ENCODE measurements at regions of chr15 and their contacts with region 1.

Region 1: GRCh38 chr15:89472785-89473256 is 23.6 kb downstream of the RHCG start:
- DNase-seq: peak; percentile 80
- ATAC-seq: peak; percentile 81
- H3K4me3 ChIP-seq: no peak overlapping the region
- H3K4me3 Mint-ChIP-seq: no peak overlapping the region
- H3K27ac ChIP-seq: no peak overlapping the region
- H3K27ac Mint-ChIP-seq: no peak overlapping the region
- H3K4me1 ChIP-seq: peaks cover 0 to 5% of the 10 kb centered on the region in 2 donors
- H3K4me1 Mint-ChIP-seq: no peaks in the 10 kb centered on the region
- H3K27me3 ChIP-seq: peaks cover 0 to 52% (median 19%) of the 10 kb centered on the region in 4 experiments
- H3K27me3 Mint-ChIP-seq: peaks cover 28% of the 10 kb centered on the region
- CTCF ChIP-seq: peak; percentile 89

Region 2: DNA sequence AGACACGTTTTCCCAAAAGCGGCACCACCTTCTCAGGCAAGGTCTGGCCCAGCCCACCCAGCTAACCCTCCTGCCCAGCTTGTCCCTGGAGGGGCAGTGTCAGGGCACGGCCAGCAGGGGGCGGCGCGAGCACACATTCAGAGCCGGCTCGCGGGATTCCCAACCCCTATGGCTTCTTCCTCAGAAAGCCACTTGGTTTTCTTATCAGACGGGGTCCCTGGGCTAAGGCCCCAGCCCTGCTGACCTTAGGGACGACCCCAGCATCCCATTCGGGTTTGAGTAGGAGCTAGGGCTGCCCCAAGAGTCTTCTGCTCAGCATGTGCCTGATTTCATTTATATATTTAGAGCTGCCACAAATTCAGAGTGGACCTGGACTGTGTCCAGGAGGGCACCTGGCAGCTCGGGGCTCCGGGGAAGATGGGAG is 265.9 kb before region 1 on chr15:
- CTCF ChIA-PET with region 1: interaction called, 5 read pairs
- POLR2A ChIA-PET with region 1: no interaction called
- intact Hi-C with region 1: loop called (anchors 5 kb)
- DNase-seq: peak; percentile 71
- ATAC-seq: peak; percentile 90
- H3K4me3 ChIP-seq: no peak overlapping the region
- H3K4me3 Mint-ChIP-seq: no peak overlapping the region
- H3K27ac ChIP-seq: no peak overlapping the region
- H3K27ac Mint-ChIP-seq: no peak overlapping the region
- H3K4me1 ChIP-seq: peaks cover 3% of the 10 kb centered on the region in 2 donors
- H3K4me1 Mint-ChIP-seq: peaks cover 9% of the 10 kb centered on the region
- H3K27me3 ChIP-seq: no peaks in the 10 kb centered on the region
- H3K27me3 Mint-ChIP-seq: peaks cover 4% of the 10 kb centered on the region
- CTCF ChIP-seq: peak; percentile 100

Region 3: DNA sequence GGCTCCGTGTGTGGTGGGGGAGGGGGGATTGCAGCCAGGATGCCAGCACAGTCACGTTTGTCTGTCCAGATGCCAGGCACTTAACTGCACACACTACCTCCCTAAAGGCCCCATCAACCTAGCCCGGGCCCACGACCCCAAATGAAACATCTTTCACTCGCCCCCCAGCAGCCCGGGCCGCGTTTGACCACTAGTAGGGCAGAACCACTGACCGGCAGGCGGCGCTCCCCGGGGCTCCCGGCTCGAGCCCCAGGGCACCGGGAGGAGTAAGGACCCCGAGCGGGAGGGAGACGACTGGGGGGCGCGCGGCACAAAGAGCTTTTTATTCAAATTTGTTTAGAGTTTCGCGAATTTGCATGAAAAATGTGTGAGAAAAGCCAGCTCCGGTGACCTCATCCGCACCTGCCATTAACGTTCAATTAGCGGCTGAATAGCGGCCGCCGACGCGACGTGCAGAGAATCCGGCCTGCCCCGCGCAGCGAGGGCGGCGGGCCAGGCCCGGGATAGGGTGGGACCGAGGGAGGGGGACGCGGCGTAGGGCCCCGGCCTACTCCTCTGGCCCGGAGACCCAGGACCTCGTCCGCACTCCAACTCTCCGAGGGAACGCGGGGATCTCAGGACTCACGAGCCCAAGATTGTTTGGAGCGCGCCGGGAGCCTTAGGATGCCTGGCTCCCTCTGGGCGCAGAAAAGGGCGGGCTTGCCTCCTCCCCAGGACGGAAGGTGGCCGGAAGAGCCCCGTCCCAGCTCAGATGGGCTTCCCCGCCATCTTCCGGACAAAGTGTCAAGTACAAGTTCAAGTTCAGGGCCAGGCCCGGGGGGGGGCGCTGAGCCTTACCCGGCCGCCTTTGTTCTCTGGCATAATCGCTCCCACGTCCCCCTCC is 73.3 kb before region 1 on chr15:
- CTCF ChIA-PET with region 1: interaction called, 4 read pairs
- POLR2A ChIA-PET with region 1: no interaction called
- intact Hi-C with region 1: loop called (anchors 1 kb)
- DNase-seq: peak; percentile 67
- ATAC-seq: peak; percentile 65
- H3K4me3 ChIP-seq: peak overlapping the region in 4 of 5 experiments; percentile 52 to 64 (median 57)
- H3K4me3 Mint-ChIP-seq: peak overlapping the region; percentile 87
- H3K27ac ChIP-seq: no peak overlapping the region
- H3K27ac Mint-ChIP-seq: peak overlapping the region; percentile 71
- H3K4me1 ChIP-seq: peaks cover 25 to 35% of the 10 kb centered on the region in 2 donors
- H3K4me1 Mint-ChIP-seq: peaks cover 24% of the 10 kb centered on the region
- H3K27me3 ChIP-seq: peaks cover 3 to 76% (median 52%) of the 10 kb centered on the region in 4 experiments
- H3K27me3 Mint-ChIP-seq: peaks cover 68% of the 10 kb centered on the region
- CTCF ChIP-seq: peak; percentile 46

Region 4: GRCh38 chr15:89416141-89416853 is 56.5 kb before region 1 on chr15:
- CTCF ChIA-PET with region 1: interaction called, 27 read pairs
- POLR2A ChIA-PET with region 1: no interaction called
- intact Hi-C with region 1: no loop called
- DNase-seq: peak; percentile 86
- ATAC-seq: peak; percentile 89
- H3K4me3 ChIP-seq: no peak overlapping the region
- H3K4me3 Mint-ChIP-seq: peak overlapping the region; percentile 14
- H3K27ac ChIP-seq: no peak overlapping the region
- H3K27ac Mint-ChIP-seq: peak overlapping the region; percentile 24
- H3K4me1 ChIP-seq: peaks cover 25 to 43% of the 10 kb centered on the region in 2 donors
- H3K4me1 Mint-ChIP-seq: peaks cover 15% of the 10 kb centered on the region
- H3K27me3 ChIP-seq: peaks cover 0 to 88% (median 57%) of the 10 kb centered on the region in 4 experiments
- H3K27me3 Mint-ChIP-seq: peaks cover 82% of the 10 kb centered on the region
- CTCF ChIP-seq: peak; percentile 94

Region 5: DNA sequence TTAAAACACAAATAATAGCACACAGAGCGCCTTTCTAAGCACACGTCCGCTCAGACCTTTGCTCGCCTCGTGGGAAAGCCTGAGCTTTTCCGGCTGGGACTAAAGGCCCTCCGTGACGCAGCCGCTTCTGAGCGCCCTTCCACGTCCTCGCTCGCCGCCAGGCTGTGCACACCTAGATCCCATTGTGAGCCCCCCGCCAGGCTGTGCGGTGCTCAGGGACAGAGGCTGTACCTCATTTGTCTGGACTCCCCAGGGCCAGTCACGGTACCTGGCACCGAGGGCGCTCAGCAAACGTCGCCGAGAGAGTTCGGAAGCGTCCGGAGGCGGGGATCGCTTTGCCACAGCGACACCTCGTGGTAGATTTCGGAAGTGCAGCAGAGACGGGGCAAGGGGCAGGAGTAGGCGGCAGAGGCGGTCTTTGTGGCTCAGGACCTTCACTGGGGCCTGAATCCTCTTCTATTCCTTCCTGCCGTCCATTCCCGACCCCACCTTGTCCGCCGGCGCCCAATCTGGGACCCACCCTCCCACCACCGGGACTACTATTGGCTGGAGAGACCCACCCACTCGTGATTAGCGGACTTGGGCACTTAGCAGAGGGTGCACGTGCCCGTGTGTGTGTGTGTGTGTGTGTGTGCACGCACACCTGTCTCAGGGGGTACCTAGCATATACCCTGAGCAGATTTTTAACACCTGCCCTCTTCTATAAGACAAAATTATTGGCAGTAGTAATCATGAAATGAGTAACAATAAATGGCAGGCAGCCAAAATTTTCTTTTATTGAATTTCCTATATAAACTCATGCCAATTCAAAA is 42.1 kb before region 1 on chr15:
- CTCF ChIA-PET with region 1: interaction called, 13 read pairs
- POLR2A ChIA-PET with region 1: no interaction called
- intact Hi-C with region 1: loop called (anchors 5 kb)
- DNase-seq: peak; percentile 90
- ATAC-seq: peak; percentile 97
- H3K4me3 ChIP-seq: peak overlapping the region; percentile 19 to 68 (median 50)
- H3K4me3 Mint-ChIP-seq: peak overlapping the region; percentile 94
- H3K27ac ChIP-seq: no peak overlapping the region
- H3K27ac Mint-ChIP-seq: peak overlapping the region; percentile 17
- H3K4me1 ChIP-seq: peaks cover 4 to 10% of the 10 kb centered on the region in 2 donors
- H3K4me1 Mint-ChIP-seq: peaks cover 7% of the 10 kb centered on the region
- H3K27me3 ChIP-seq: peaks cover 0 to 25% (median 3%) of the 10 kb centered on the region in 4 experiments
- H3K27me3 Mint-ChIP-seq: peaks cover 25% of the 10 kb centered on the region
- CTCF ChIP-seq: peak; percentile 98

Region 6: DNA sequence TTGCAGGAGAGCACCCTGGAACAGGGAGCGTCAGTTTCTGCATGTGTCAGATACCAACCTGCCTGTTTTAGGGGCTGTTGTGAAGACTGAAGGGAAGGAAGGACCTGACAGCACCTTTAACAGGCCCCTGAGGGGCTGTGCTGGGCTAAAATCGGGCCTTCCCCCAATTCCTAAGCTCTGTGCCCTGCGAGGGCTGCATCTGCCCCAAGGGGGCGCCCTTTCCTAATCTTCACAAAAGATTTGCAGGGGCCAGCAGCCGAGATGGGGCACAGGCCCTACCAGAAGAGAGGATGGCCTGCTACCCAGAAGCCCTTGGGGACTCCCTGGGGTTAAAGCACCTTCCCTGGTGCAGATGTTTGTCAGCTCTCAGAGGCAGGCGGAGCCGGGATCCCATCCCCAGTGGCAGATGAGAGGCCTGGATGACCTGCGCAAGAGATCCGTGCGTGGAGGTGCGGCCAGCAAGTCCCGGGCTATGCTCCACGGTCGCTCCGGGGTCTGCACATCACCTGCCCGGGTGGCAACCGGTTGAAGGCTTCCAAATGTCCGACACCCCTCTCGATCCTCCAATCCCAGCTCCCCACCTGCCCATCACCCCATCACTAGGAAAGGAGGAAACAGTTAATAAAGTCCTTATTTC is 30.0 kb before region 1 on chr15:
- CTCF ChIA-PET with region 1: interaction called, 19 read pairs
- POLR2A ChIA-PET with region 1: no interaction called
- intact Hi-C with region 1: no loop called
- DNase-seq: peak; percentile 41
- ATAC-seq: no peak
- H3K4me3 ChIP-seq: no peak overlapping the region
- H3K4me3 Mint-ChIP-seq: peak overlapping the region; percentile 37
- H3K27ac ChIP-seq: no peak overlapping the region
- H3K27ac Mint-ChIP-seq: no peak overlapping the region
- H3K4me1 ChIP-seq: peaks cover 29 to 34% of the 10 kb centered on the region in 2 donors
- H3K4me1 Mint-ChIP-seq: peaks cover 33% of the 10 kb centered on the region
- H3K27me3 ChIP-seq: peaks cover 0 to 15% (median 2%) of the 10 kb centered on the region in 4 experiments
- H3K27me3 Mint-ChIP-seq: peaks cover 23% of the 10 kb centered on the region
- CTCF ChIP-seq: peak; percentile 55